ENCODE measurements at regions of chr2 and their contacts with region 1.

Region 1: GRCh38 chr2:39379643-39380524 is 57.2 kb downstream of the MAP4K3 start:
- DNase-seq: peak in 1 of 4 donors; percentile 62
- ATAC-seq: peak; percentile 91
- H3K4me3 ChIP-seq: no peak overlapping the region
- H3K27ac ChIP-seq: peak overlapping the region; percentile 18 to 76 (median 44)
- H3K4me1 ChIP-seq: peaks cover 32% of the 10 kb centered on the region
- H3K27me3 ChIP-seq: no peaks in the 10 kb centered on the region
- CTCF ChIP-seq: peak in 6 of 7 experiments; percentile 20 to 77 (median 66)
- POLR2A ChIP-seq: no peak

Region 2: GRCh38 chr2:39436592-39437510 is 57.0 kb after region 1 on chr2 and contains the start of gene MAP4K3:
- intact Hi-C with region 1: loop called (anchors 10 kb)
- DNase-seq: peak; percentile 93 to 96 (median 94)
- ATAC-seq: peak; percentile 92
- H3K4me3 ChIP-seq: peak within 1 kb of the TSS; percentile 27 to 91
- H3K27ac ChIP-seq: peak within 1 kb of the TSS; percentile 90 to 96 (median 94)
- H3K4me1 ChIP-seq: peaks cover 59% of the 10 kb centered on the region
- H3K27me3 ChIP-seq: no peaks in the 10 kb centered on the region
- CTCF ChIP-seq: no peak
- POLR2A ChIP-seq: peak in 2 of 3 donors; percentile 85 to 90
- total RNA-seq, gene MAP4K3: 50.6 to 54.4 TPM